ENCODE measurements at regions of chr3 and their contacts with region 1.

Region 1: DNA sequence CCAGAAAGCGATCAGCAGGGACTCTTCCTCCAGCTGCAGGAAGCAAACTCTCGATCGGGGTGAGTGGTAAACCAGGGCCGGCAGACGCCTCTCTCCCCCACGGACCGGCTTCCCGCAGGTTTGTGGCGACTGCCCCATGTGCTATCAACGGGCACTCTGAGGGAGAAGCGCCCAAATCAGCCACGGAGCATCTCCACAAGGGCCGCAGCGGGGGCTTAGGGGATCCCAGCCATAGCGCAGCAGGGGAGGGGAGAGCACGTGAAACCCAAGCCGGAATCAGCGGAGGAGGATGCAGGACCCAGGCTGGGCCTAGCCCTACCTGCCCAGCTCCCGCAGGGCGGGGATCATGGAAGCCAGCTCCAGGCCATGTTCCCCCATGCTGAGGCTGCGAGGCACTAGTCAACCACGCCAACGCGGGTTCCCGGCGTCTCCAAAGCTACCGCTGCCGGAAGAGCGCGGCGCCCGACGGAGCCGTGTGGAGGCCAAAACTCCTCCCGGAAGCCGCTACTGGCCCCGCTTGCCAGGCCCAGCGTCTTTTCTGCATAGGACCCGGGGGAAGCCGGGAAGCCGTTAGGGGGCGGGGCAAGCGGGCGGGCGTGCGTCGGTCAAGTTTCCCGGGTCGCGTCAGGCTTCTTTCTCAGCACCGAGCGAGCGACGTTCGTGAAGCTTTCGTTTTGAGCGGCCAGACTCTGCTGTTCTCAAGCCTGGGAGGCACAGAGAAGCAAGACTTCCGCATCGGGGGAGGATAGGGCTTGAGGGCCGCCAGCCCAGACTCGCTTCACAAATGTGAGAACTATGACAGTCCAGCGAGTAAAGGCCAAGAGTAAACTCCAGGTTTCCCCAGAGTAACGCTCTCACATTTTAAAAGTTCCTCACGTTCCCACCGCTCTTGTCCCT is at the start of gene ATR:
- DNase-seq: peak; percentile 98
- H3K4me3 ChIP-seq: peak within 1 kb of the TSS; percentile 82 to 100 (median 97)
- H3K27ac ChIP-seq: peak within 1 kb of the TSS; percentile 91
- H3K4me1 ChIP-seq: peaks cover 13% of the 10 kb centered on the region
- H3K27me3 ChIP-seq: no peaks in the 10 kb centered on the region
- CTCF ChIP-seq: no peak
- total RNA-seq, gene ATR: 31.1 to 43.2 TPM

Region 2: GRCh38 chr3:142429582-142429981 is 149.0 kb before region 1 on chr3:
- CTCF ChIA-PET with region 1: no interaction called
- dilution Hi-C with region 1: no loop called
- in situ Hi-C with region 1: no loop called
- intact Hi-C with region 1: no loop called
- DNase-seq: no peak
- H3K4me3 ChIP-seq: no peak overlapping the region
- H3K27ac ChIP-seq: no peak overlapping the region
- H3K4me1 ChIP-seq: no peaks in the 10 kb centered on the region
- H3K27me3 ChIP-seq: no peaks in the 10 kb centered on the region
- CTCF ChIP-seq: no peak

Region 3: GRCh38 chr3:142808103-142808917 is 229.7 kb after region 1 on chr3:
- CTCF ChIA-PET with region 1: no interaction called
- dilution Hi-C with region 1: no loop called
- in situ Hi-C with region 1: loop called in 1 of 2 experiments (anchors 25 kb)
- intact Hi-C with region 1: no loop called
- DNase-seq: peak; percentile 89
- H3K4me3 ChIP-seq: no peak overlapping the region
- H3K27ac ChIP-seq: peak overlapping the region; percentile 57
- H3K4me1 ChIP-seq: peaks cover 8% of the 10 kb centered on the region
- H3K27me3 ChIP-seq: no peaks in the 10 kb centered on the region
- CTCF ChIP-seq: no peak

Region 4: GRCh38 chr3:142888481-142889211 is 310.1 kb after region 1 on chr3 and contains the start of gene PCOLCE2:
- CTCF ChIA-PET with region 1: no interaction called
- dilution Hi-C with region 1: no loop called
- in situ Hi-C with region 1: no loop called
- intact Hi-C with region 1: loop called (anchors 1 kb)
- DNase-seq: peak; percentile 47
- H3K4me3 ChIP-seq: peak within 1 kb of the TSS; percentile 60 to 61 (median 60)
- H3K27ac ChIP-seq: no peak within 1 kb of the TSS
- H3K4me1 ChIP-seq: peaks cover 13% of the 10 kb centered on the region
- H3K27me3 ChIP-seq: no peaks in the 10 kb centered on the region
- CTCF ChIP-seq: no peak
- total RNA-seq, gene PCOLCE2: 2.8 to 3.5 TPM

Region 5: DNA sequence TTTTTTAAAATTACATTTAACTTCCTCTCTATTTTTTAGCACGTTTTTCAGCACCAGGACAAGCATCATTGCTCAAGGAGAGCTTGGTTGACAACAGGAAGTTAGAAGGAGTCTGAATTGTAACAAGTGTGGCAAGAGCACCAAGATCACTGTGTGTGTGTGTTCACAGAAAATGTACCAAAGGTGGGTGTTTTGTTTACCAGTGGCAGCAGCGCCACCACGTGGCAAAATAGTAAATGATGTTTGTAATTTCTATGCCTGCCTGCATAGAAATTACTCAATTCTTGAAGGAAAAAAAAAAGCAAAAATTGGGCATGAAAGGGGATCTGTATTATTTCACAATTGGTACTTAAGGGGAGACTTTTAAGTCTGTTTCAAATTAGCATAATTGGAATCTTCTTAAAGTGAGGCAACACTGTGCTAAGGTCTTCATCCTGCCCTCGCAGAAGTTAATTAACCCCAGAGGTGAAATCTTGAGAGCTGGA is 415.4 kb after region 1 on chr3:
- CTCF ChIA-PET with region 1: no interaction called
- dilution Hi-C with region 1: loop called (anchors 25 kb)
- in situ Hi-C with region 1: loop called in 1 of 2 experiments (anchors 10 kb)
- intact Hi-C with region 1: no loop called
- DNase-seq: peak; percentile 44
- H3K4me3 ChIP-seq: no peak overlapping the region
- H3K27ac ChIP-seq: no peak overlapping the region
- H3K4me1 ChIP-seq: no peaks in the 10 kb centered on the region
- H3K27me3 ChIP-seq: no peaks in the 10 kb centered on the region
- CTCF ChIP-seq: peak; percentile 66

Region 6: DNA sequence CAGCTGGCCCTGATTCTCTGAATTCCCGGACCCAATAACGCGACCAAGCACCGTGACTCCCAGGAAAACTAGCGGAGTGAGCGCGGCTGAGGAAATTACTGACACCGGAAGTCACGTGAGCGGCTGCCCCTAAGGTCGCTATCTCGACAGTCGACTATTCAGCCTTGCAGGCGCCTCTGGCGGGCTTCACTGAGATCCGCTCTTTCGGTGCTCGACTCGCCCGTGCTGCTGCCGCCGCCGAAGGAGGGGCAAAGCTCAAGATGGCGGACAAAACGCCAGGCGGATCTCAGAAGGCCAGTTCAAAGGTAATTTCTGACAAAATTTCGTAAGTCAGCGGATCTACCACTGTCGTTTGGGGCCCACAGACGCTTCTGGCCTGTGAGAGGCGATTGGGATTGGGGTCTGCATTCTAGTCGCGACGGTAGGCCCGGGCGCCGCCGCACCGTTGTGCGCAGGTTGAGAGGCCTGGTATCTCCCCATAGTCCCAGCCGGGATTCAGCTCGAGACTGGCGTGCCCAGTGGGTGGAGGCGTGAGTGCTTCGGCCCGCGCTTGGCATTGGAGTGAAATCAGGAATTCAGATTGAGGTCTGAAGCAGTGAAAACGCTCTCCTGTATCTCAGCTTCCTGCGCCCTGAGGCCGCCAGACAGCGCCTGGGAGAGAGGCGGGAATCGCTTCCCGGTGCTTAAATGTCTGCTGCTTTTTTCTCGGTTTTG is 423.0 kb after region 1 on chr3 and contains the start of gene U2SURP:
- CTCF ChIA-PET with region 1: no interaction called
- dilution Hi-C with region 1: loop called (anchors 25 kb)
- in situ Hi-C with region 1: loop called in 1 of 2 experiments (anchors 10 kb)
- intact Hi-C with region 1: loop called (anchors 5 kb)
- DNase-seq: peak; percentile 98
- H3K4me3 ChIP-seq: peak within 1 kb of the TSS; percentile 56 to 89 (median 67)
- H3K27ac ChIP-seq: peak within 1 kb of the TSS; percentile 93
- H3K4me1 ChIP-seq: peaks cover 17% of the 10 kb centered on the region
- H3K27me3 ChIP-seq: no peaks in the 10 kb centered on the region
- CTCF ChIP-seq: no peak
- total RNA-seq, gene U2SURP: 76.7 to 122 TPM

Measured in mammary epithelial cell (primary cell).